K562 (cell line): ENCODE measurements at regions of chr1 and their contacts with region 1.

Region 1: DNA sequence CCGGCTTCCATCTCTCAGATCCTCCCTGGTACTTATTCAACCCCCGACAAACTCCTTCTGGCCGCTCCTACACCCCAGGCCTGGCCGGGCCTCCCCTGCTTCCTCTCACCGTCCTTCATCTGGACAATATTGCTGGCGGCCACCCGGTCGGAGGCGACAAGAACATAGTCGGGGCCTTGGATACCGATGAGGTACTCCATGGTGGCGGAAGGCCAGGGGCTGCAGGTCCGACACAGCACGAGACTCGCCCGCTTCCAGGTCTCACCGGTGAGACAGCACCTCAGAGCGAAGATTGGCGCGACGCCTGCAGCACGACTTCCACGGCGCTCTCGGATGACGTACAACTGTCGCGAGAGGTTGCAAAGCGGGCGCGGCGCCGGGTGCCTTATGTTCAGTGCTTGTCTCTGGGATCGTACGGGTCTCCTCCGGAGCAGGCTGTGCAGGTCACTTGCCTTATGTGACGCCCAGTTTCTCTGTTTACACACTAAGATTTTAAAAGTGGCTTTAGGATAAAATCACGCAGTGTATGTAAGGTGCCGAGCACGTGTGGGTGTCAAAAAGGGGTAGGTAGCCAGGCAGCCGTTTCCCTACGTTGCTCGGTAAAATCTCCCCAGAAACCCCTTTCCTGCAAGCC is at the start of gene PSMB2:
- DNase-seq: peak; percentile 91 to 100 (median 92)
- ATAC-seq: peak; percentile 84
- H3K4me3 ChIP-seq: peak within 1 kb of the TSS; percentile 72
- H3K27ac ChIP-seq: peak within 1 kb of the TSS; percentile 94
- H3K4me1 ChIP-seq: peaks cover 0 to 7% of the 10 kb centered on the region in 2 experiments; a peak in 1 of 5 replicates
- H3K27me3 ChIP-seq: 0 out of 5 replicates have a peak, but pooled peaks cover 0 to 6% of the 10 kb centered on the region in 2 experiments
- CTCF ChIP-seq: peak in 1 of 3 experiments; percentile 14; a peak in 1 of 6 replicates
- EP300 ChIP-seq: peak; percentile 56; the same call in 1 of the 2 replicates
- POLR2A ChIP-seq: peak; percentile 98
- RAD21 ChIP-seq: no peak
- polyA plus RNA-seq, gene PSMB2: 499 to 543 TPM

Region 2: DNA sequence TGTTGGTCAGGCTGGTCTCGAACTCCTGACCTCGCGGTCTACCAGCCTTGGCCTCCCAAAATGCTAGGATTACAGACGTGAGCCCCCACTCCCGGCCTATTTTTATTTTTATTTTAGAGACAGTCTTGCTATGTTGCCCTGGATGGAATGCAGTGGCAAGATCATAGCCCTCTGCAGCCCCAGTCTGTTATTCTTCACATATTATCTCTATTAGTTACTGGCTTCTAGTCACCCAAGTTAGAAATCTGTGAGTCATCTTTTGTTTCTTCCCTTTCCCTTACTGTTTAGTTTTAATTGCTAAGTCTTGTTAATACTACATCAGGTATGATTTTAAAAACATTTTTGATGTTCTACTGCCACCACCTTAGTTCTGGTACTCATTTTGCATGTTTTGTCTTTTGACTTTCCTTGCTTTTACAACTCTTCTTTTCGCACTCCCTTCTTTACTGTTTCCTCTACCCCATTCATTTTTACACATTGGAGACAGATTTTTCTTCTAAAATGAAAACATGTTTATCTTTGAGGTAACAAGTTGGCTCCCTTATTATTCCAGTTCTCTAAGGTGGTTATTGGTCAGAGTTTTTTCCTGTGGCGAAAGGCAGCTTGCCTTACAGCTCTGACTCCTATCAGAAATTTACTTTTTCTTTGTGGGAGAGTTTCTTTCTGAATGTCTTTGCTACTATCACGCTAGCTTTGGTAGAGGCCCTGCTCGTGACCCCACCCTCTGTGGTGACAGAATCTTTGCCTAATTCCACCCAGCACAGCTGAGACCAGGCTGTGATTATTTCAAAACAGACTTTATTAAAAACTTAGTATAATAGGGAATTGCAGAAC is 353.3 kb before region 1 on chr1:
- CTCF ChIA-PET with region 1: no interaction called
- POLR2A ChIA-PET with region 1: no interaction called
- in situ Hi-C with region 1: no loop called
- intact Hi-C with region 1: no loop called
- DNase-seq: no peak
- ATAC-seq: peak; percentile 30; the same call in 1 of the 3 replicates
- H3K4me3 ChIP-seq: no peak overlapping the region
- H3K27ac ChIP-seq: no peak overlapping the region
- H3K4me1 ChIP-seq: peaks cover 7 to 10% of the 10 kb centered on the region in 2 experiments; a peak in 4 of 5 replicates
- H3K27me3 ChIP-seq: no peaks in the 10 kb centered on the region
- CTCF ChIP-seq: no peak
- EP300 ChIP-seq: no peak
- POLR2A ChIP-seq: no peak
- RAD21 ChIP-seq: no peak

Region 3: GRCh38 chr1:35569936-35570335 is 71.4 kb before region 1 on chr1:
- CTCF ChIA-PET with region 1: no interaction called
- POLR2A ChIA-PET with region 1: no interaction called
- in situ Hi-C with region 1: no loop called
- intact Hi-C with region 1: loop called (anchors 1 kb)
- DNase-seq: no peak
- ATAC-seq: no peak
- H3K4me3 ChIP-seq: no peak overlapping the region
- H3K27ac ChIP-seq: no peak overlapping the region
- H3K4me1 ChIP-seq: peaks cover 3 to 23% of the 10 kb centered on the region in 2 experiments; a peak in 2 of 5 replicates
- H3K27me3 ChIP-seq: peaks cover 3 to 18% of the 10 kb centered on the region in 2 experiments; a peak in 4 of 5 replicates
- CTCF ChIP-seq: no peak
- EP300 ChIP-seq: no peak
- POLR2A ChIP-seq: no peak
- RAD21 ChIP-seq: no peak

Region 4: DNA sequence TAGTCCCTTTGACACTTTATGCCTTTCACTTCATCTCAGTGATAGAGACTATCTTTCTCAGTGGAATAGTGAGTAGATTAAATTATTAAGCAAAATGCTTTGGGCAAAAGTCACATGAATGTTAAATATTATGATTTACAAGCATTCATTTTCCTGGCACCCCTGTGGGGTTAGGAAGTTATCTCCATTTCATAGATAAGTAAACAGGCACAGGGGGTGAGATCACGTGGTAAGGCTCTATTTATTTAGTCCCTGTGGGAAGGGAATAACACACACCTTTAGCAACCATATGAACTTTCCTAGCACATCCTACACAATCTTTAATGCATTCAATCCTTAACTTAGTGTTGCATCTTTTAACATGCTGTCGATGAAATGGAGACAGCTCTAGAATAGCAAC is 12.3 kb before region 1 on chr1:
- CTCF ChIA-PET with region 1: no interaction called
- POLR2A ChIA-PET with region 1: interaction called, 20 read pairs
- in situ Hi-C with region 1: no loop called
- intact Hi-C with region 1: no loop called
- DNase-seq: no peak
- ATAC-seq: no peak
- H3K4me3 ChIP-seq: no peak overlapping the region
- H3K27ac ChIP-seq: no peak overlapping the region
- H3K4me1 ChIP-seq: peaks cover 0 to 4% of the 10 kb centered on the region in 2 experiments; a peak in 2 of 5 replicates
- H3K27me3 ChIP-seq: no peaks in the 10 kb centered on the region
- CTCF ChIP-seq: no peak
- EP300 ChIP-seq: no peak
- POLR2A ChIP-seq: no peak
- RAD21 ChIP-seq: no peak

Region 5: DNA sequence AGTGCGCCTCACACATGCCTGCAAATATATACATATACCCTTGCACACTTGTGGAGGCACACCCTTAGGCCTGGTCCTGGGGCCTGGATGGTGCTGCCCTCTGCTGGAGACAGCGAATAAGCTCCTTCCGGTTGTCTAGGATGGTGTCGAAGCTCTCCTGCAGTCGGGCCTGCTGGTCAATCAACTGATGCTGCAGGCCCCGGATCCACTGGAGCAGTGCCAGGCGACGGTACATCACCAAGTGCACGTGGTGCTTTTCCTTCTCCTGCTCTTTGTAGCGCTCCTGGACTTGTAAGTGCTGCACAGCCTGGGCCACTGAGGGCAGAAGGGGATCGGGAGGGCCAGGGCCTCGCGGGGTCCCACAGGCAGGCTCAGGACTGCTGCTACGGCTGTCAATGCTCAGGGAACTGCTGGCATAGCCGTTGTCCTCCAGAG is 74.2 kb after region 1 on chr1:
- CTCF ChIA-PET with region 1: no interaction called
- POLR2A ChIA-PET with region 1: interaction called, 3 read pairs
- in situ Hi-C with region 1: no loop called
- intact Hi-C with region 1: loop called (anchors 5 kb)
- DNase-seq: peak; percentile 74 to 90 (median 82)
- ATAC-seq: peak; percentile 77
- H3K4me3 ChIP-seq: no peak overlapping the region
- H3K27ac ChIP-seq: no peak overlapping the region
- H3K4me1 ChIP-seq: peaks cover 19 to 23% of the 10 kb centered on the region in 2 experiments; a peak in 4 of 5 replicates
- H3K27me3 ChIP-seq: no peaks in the 10 kb centered on the region
- CTCF ChIP-seq: peak; percentile 92 to 98 (median 94)
- EP300 ChIP-seq: no peak
- POLR2A ChIP-seq: no peak
- RAD21 ChIP-seq: peak; percentile 79 to 90